Caco-2 (cell line): ENCODE measurements at regions of chr5 and their contacts with region 1.

Region 1: GRCh38 chr5:127586066-127586770 is 62.7 kb upstream of the CTXN3 start:
- DNase-seq: peak in 1 of 2 experiments; percentile 48
- H3K4me3 ChIP-seq: no peak overlapping the region
- H3K4me3 Mint-ChIP-seq: peak overlapping the region; percentile 0
- H3K27ac Mint-ChIP-seq: no peak overlapping the region
- H3K4me1 ChIP-seq: peaks cover 15% of the 10 kb centered on the region
- H3K4me1 Mint-ChIP-seq: peaks cover 9% of the 10 kb centered on the region
- H3K27me3 ChIP-seq: no peaks in the 10 kb centered on the region
- H3K27me3 Mint-ChIP-seq: no peaks in the 10 kb centered on the region
- CTCF ChIP-seq: no peak

Region 2: DNA sequence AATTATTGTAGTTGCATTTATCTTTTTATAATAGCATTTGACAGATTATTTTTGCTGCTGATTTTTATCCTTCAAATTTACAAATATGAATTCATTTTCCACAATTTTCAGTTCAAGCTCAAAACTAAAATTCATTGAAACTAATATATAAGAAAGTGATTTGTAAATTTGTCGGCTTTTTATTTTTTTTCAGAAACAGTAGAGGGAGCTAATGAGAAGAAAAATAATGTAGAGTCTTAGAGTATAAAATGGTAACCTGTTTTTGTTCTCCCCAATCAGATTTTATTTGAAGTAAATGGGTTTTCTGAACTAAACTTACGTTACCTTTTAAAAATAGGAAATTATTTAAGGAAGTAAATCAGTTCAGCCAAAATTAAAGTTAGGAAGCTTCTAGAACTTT is 49.5 kb before region 1 on chr5:
- CTCF ChIA-PET with region 1: no interaction called
- POLR2A ChIA-PET with region 1: no interaction called
- intact Hi-C with region 1: no loop called
- DNase-seq: no peak
- H3K4me3 ChIP-seq: no peak overlapping the region
- H3K4me3 Mint-ChIP-seq: no peak overlapping the region
- H3K27ac Mint-ChIP-seq: no peak overlapping the region
- H3K4me1 ChIP-seq: no peaks in the 10 kb centered on the region
- H3K4me1 Mint-ChIP-seq: no peaks in the 10 kb centered on the region
- H3K27me3 ChIP-seq: no peaks in the 10 kb centered on the region
- H3K27me3 Mint-ChIP-seq: no peaks in the 10 kb centered on the region
- CTCF ChIP-seq: peak in 1 of 2 experiments; percentile 13

Region 3: GRCh38 chr5:127634007-127634406 is 47.8 kb after region 1 on chr5:
- CTCF ChIA-PET with region 1: no interaction called
- POLR2A ChIA-PET with region 1: no interaction called
- intact Hi-C with region 1: no loop called
- DNase-seq: no peak
- H3K4me3 ChIP-seq: no peak overlapping the region
- H3K4me3 Mint-ChIP-seq: no peak overlapping the region
- H3K27ac Mint-ChIP-seq: no peak overlapping the region
- H3K4me1 ChIP-seq: no peaks in the 10 kb centered on the region
- H3K4me1 Mint-ChIP-seq: no peaks in the 10 kb centered on the region
- H3K27me3 ChIP-seq: no peaks in the 10 kb centered on the region
- H3K27me3 Mint-ChIP-seq: peaks cover 2% of the 10 kb centered on the region
- CTCF ChIP-seq: no peak

Region 4: DNA sequence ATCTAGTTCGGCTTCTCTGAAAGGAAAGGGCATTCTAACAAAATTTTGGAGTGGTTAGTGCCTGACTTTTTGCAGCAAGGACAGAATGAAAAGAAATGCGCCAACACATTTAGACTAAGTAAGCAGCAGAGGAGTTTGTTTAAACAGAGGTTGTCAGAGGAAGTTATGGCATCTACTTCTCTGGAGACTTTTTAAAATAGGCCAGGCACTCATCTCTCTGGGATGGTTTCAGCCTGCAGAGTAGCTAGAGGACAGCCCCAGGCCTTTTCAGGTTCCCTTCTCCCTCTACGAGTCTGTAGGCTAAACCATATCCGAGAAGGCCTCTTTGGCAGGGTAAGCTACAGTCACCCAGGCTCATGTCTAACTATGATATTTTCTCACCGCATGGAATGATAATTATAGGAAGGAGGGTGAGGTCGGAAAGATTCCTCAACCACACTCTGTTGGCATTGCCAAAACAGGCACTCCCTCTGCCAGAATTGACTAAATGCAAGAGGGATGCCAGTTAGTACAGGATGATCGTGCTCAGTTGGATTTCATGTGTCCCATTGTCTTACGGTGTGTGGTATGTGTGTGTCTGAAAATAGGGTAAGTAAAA is 61.2 kb after region 1 on chr5:
- CTCF ChIA-PET with region 1: no interaction called
- POLR2A ChIA-PET with region 1: no interaction called
- intact Hi-C with region 1: loop called (anchors 2 kb)
- DNase-seq: no peak
- H3K4me3 ChIP-seq: no peak overlapping the region
- H3K4me3 Mint-ChIP-seq: no peak overlapping the region
- H3K27ac Mint-ChIP-seq: no peak overlapping the region
- H3K4me1 ChIP-seq: peaks cover 4% of the 10 kb centered on the region; the same call in 1 of the 2 replicates
- H3K4me1 Mint-ChIP-seq: peaks cover 21% of the 10 kb centered on the region
- H3K27me3 ChIP-seq: no peaks in the 10 kb centered on the region; the same call in 1 of the 2 replicates
- H3K27me3 Mint-ChIP-seq: peaks cover 2% of the 10 kb centered on the region
- CTCF ChIP-seq: no peak